Heart right ventricle (tissue), 16 donors: ENCODE measurements at regions of chrX and their contacts with region 1.

Region 1: GRCh38 chrX:46446727-46447378 is 98.4 kb downstream of the ZNF674 start:
- DNase-seq: peak; percentile 87 to 89
- ATAC-seq: peak; percentile 98 to 100 (median 99)
- H3K4me3 ChIP-seq: peak overlapping the region; percentile 41 to 79 (median 69)
- H3K27ac ChIP-seq: peak overlapping the region in 9 of 10 donors; percentile 80 to 94 (median 88)
- H3K4me1 ChIP-seq: peaks cover 0 to 13% (median 0%) of the 10 kb centered on the region in 9 donors
- H3K27me3 ChIP-seq: peaks cover 0 to 5% (median 0%) of the 10 kb centered on the region in 7 donors
- CTCF ChIP-seq: no peak

Region 2: DNA sequence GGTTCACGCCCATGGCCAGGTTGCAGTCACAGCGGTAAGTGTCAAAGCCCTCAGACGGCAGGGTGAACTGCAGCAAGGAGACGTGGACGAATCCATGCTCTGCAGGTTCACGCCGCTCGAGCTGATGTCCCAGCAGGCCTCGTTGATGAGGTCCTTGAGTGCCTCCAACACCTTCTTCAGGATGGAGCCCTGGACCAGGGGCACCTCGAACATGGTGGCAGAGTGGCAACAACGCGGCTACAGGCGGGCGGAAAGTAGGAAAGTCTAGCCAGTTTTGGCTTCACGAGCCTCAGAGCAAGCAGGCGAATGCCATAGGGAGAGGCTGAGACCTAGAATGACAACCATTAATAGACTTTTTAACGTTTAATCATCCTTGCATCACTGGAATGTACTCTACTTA is 387.5 kb before region 1 on chrX:
- intact Hi-C with region 1: no loop called
- DNase-seq: no peak
- ATAC-seq: no peak
- H3K4me3 ChIP-seq: no peak overlapping the region
- H3K27ac ChIP-seq: no peak overlapping the region
- H3K4me1 ChIP-seq: no peaks in the 10 kb centered on the region
- H3K27me3 ChIP-seq: no peaks in the 10 kb centered on the region
- CTCF ChIP-seq: no peak

Region 3: GRCh38 chrX:46545111-46546005 is 98.5 kb after region 1 on chrX and contains the start of gene ZNF674:
- intact Hi-C with region 1: loop called in 1 of 10 experiments (anchors 10 kb)
- DNase-seq: peak; percentile 92 to 93
- ATAC-seq: peak; percentile 93 to 99 (median 96)
- H3K4me3 ChIP-seq: peak within 1 kb of the TSS; percentile 55 to 92 (median 78)
- H3K27ac ChIP-seq: peak within 1 kb of the TSS; percentile 54 to 91 (median 84)
- H3K4me1 ChIP-seq: peaks cover 0 to 31% (median 14%) of the 10 kb centered on the region in 9 donors
- H3K27me3 ChIP-seq: no peaks in the 10 kb centered on the region
- CTCF ChIP-seq: peak in 7 of 9 donors; percentile 6 to 51 (median 34)
- total RNA-seq, gene ZNF674: 2.1 to 4.3 (median 2.6) TPM